Heart left ventricle (tissue), 16 donors: ENCODE measurements at regions of chr9 and their contacts with region 1.

Region 1: DNA sequence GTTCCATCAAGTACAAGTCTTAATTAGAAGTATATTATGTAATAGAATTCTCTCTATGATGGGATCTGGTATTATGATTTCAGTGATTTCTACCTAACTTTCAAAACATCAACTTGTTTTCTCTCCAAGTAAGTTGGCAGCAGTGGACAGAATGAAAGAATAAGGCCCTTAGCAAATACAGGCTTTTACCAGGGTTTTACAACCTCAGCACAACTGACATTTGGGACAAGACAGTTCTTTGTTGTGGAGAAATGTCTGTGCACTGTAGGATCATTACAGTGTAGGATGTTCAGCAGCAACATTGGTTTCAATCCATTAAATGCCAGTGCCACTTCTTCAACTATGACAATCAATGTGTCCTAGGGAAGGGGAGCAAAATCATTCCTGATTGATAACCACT is 48.8 kb downstream of the MLANA start:
- DNase-seq: no peak
- ATAC-seq: no peak
- H3K4me3 ChIP-seq: no peak overlapping the region
- H3K27ac ChIP-seq: no peak overlapping the region
- H3K4me1 ChIP-seq: no peaks in the 10 kb centered on the region
- H3K27me3 ChIP-seq: no peaks in the 10 kb centered on the region
- CTCF ChIP-seq: no peak
- POLR2A ChIP-seq: no peak

Region 2: DNA sequence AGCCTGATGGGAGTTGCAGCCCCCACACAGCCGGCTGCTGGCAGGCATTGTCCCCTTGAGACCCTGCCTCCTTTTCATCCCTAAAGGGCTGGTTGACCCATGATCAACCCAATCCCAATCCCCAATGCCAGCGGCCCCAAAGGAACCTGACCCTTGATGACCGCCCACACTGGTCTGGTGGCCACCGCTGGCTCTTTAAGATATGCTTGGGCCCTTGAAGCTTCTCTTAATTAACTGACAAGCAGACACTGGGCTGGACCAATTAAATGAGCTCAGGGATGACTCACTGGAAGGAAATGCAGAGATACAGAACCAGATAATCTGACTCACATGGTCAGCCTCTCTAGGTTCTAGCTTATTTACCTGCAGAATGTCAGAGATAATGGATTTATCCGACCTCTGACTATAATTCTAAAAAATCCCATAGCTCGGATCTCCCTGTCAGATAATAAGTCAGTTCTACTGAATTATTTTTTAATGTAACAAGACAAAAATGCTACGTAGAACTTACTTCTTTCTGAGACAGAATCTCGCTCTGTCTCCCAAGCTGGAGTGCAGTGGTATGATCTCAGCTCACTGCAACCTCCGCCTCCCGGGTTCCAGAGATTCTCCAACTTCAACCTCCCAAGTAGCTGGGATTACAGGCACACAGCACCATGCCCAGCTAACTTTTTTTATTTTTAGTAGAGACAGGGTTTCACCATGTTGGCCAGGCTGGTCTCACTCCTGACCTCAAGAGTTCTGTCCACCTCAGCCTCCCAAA is 59.9 kb before region 1 on chr9:
- intact Hi-C with region 1: loop called in 1 of 10 experiments (anchors 10 kb)
- DNase-seq: no peak
- ATAC-seq: peak in 1 of 4 donors; percentile 41
- H3K4me3 ChIP-seq: no peak overlapping the region
- H3K27ac ChIP-seq: no peak overlapping the region
- H3K4me1 ChIP-seq: no peaks in the 10 kb centered on the region
- H3K27me3 ChIP-seq: no peaks in the 10 kb centered on the region
- CTCF ChIP-seq: no peak
- POLR2A ChIP-seq: no peak